ENCODE measurements at regions of chr1 and their contacts with region 1.

Region 1: GRCh38 chr1:66331657-66332547 is 202.1 kb upstream of the SGIP1 start:
- DNase-seq: peak; percentile 77 to 89 (median 87)
- ATAC-seq: peak; percentile 69 to 71
- H3K4me3 ChIP-seq: peak overlapping the region; percentile 85
- H3K27ac ChIP-seq: peak overlapping the region; percentile 55
- H3K4me1 ChIP-seq: peaks cover 6% of the 10 kb centered on the region
- H3K27me3 ChIP-seq: no peaks in the 10 kb centered on the region

Region 2: DNA sequence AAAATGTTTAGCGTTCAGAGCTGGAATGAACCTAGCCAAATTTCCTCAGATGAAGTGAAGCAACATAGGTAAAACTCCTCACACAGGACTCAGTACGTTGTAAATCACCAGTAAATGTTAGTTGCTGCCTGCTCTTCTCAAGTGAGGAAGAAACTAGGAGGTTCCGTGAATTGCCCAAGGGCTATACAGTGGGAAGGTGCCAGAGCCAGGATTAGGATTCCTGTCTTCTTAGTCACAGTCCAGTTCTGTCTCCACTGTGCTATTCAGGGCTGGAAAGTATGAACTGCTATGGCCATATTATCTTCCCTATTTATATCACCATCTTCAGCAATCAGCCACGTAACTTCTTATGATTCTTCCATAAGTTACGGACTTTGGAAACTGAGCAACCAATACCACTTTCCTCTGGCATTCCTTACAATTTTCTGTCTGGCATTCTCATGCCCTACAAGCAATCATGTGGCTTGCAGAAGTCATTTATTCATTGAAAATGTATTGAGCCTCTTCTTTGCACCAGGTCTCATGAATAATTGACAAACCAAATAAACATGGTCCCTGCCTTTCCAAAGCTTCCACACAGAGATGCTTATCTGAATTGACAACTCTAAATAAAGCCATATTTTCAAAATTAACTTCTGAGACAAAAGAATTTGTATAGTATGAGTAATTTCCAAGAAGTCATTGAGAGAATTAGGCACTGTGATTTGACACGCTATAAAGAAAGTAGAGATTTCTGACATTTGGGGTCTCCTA is 69.5 kb before region 1 on chr1:
- intact Hi-C with region 1: loop called in 2 of 4 experiments (anchors 5 to 10 kb)
- DNase-seq: no peak
- ATAC-seq: peak; percentile 55 to 57
- H3K4me3 ChIP-seq: no peak overlapping the region
- H3K27ac ChIP-seq: no peak overlapping the region
- H3K4me1 ChIP-seq: peaks cover 3% of the 10 kb centered on the region
- H3K27me3 ChIP-seq: no peaks in the 10 kb centered on the region

Region 3: GRCh38 chr1:66271216-66271903 is 60.5 kb before region 1 on chr1:
- intact Hi-C with region 1: loop called (anchors 5 to 10 kb)
- DNase-seq: peak; percentile 86 to 95 (median 89)
- ATAC-seq: peak; percentile 89 to 92
- H3K4me3 ChIP-seq: peak overlapping the region; percentile 16
- H3K27ac ChIP-seq: peak overlapping the region; percentile 100
- H3K4me1 ChIP-seq: peaks cover 18% of the 10 kb centered on the region
- H3K27me3 ChIP-seq: no peaks in the 10 kb centered on the region